ENCODE measurements at regions of chr10 and their contacts with region 1.

Region 1: GRCh38 chr10:110893559-110894179 is 21.9 kb downstream of the PDCD4 start:
- DNase-seq: no peak
- H3K4me3 ChIP-seq: no peak overlapping the region
- H3K27ac ChIP-seq: no peak overlapping the region
- H3K4me1 ChIP-seq: no peaks in the 10 kb centered on the region
- H3K27me3 ChIP-seq: no peaks in the 10 kb centered on the region
- CTCF ChIP-seq: peak; percentile 65

Region 2: GRCh38 chr10:110803830-110804338 is 89.8 kb before region 1 on chr10:
- CTCF ChIA-PET with region 1: no interaction called
- POLR2A ChIA-PET with region 1: no interaction called
- intact Hi-C with region 1: loop called (anchors 5 kb)
- DNase-seq: no peak
- H3K4me3 ChIP-seq: no peak overlapping the region
- H3K27ac ChIP-seq: no peak overlapping the region
- H3K4me1 ChIP-seq: no peaks in the 10 kb centered on the region
- H3K27me3 ChIP-seq: no peaks in the 10 kb centered on the region
- CTCF ChIP-seq: peak; percentile 46; the same call in 1 of the 2 replicates

Measured in PC-9 (cell line).